ENCODE measurements at regions of chr17 and their contacts with region 1.

Region 1: DNA sequence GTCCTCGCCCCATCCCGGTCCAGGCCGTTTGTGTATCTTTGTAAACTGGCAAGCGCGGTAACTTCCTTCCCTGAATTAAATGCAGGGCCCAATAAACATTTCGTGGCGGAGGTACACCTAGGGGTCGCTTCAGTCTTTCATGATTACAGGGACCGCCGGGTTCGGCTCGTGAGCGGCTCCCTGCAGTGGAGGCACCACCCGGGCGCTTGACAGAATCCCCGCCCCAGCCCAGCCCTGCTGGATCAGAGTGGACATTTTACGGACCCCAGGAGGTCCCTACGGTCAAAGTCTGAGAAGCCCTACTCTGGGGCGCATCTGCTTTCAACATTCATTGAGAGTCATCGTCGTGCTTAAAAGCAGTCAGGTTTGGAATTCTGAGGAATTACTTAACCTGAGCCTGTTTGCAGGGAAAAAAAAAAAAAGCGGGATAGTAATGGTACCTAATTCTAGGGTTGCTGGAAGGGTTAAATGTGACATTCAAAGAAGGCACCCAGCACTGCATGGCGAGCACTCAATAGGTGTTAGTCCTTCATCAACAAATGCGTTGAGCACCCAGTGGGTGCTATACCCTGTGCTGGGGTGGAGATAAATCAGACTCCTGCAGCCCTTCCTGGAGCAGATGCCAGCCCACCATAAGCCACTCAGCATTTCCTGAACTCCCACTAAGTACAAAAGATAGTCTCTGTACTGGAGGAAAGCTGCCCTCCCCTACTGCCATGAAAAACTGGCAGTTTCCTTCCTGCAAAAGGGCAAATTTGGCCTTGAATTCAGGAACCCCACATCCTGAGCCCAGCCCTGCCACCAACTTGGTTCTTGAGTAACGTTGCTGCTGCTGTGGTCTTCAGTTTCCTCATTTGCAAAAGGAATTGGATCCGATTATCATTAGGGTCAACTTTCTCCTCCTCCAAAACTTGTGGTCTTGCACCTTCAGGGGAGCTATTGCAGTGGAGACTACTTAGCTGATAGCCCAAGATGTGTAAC is 658 bp upstream of the DUSP3 start:
- DNase-seq: no peak
- ATAC-seq: no peak
- H3K4me3 ChIP-seq: peak overlapping the region; percentile 98
- H3K27ac ChIP-seq: peak overlapping the region; percentile 100
- H3K4me1 ChIP-seq: peaks cover 36% of the 10 kb centered on the region
- H3K27me3 ChIP-seq: no peaks in the 10 kb centered on the region
- CTCF ChIP-seq: no peak

Region 2: DNA sequence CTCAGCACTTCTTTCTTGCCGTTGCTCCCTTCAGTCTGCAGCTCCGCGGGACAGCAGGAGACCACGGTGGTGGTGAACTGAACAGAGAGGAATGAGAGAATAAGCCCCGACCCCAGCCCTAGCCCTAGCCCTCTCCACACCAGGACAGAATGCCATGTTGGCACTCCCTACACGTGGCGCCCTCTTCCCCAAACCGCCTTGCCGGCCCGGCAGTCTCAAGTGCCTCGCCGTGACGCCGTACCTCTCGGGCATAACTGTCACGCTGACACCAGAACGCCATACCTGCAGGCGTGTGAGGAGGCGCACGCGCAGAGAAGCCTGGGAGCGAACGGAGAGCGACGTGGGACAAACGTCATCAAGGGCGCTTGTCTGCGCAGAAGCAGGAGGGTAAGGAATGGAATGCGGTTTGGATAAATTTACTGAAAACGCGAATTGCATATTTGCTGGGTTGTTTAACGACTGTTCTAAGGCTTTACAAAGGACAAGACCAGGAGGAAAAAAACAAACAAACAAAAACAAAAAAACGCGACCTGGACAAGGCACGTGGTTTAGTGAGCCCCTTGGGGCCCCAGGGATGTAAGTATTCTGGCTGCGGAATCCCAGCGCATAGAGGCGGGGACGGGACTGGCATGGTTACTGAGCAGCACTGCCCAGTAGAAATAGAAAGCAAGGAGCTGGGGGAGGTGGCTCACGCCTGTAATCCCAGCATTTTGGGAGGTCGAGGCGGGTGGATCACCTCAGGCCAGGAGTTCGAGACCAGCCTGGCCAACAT is 815.1 kb before region 1 on chr17 and contains the start of gene AARSD1:
- intact Hi-C with region 1: no loop called
- DNase-seq: peak; percentile 90 to 95
- ATAC-seq: peak; percentile 96 to 98 (median 96)
- H3K4me3 ChIP-seq: peak within 1 kb of the TSS; percentile 70
- H3K27ac ChIP-seq: peak within 1 kb of the TSS; percentile 83
- H3K4me1 ChIP-seq: peaks cover 7% of the 10 kb centered on the region
- H3K27me3 ChIP-seq: no peaks in the 10 kb centered on the region
- CTCF ChIP-seq: no peak
- total RNA-seq, gene AARSD1: 29.7 to 54.6 (median 43.1) TPM

Region 3: DNA sequence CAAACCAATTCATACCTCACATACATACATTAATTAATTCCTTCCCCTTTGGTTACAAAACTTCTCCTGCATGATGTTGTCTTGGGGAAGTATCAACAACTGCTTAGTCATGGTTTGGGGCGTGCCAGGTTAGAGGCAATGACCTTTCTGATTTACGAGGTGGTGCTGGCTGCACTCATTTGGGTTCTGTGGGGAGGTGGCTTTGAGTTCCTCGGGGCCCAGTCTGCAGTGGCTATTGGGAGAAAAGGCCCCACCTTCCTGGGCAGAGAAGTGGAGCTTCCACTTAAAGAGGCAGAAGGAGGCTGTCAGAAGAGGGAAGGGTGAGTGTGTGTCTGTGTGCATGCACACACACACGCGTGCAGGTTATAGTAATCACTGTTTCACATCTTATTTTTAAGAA is 223.1 kb before region 1 on chr17:
- intact Hi-C with region 1: no loop called
- DNase-seq: peak; percentile 32 to 58
- ATAC-seq: peak; percentile 58 to 88 (median 72)
- H3K4me3 ChIP-seq: no peak overlapping the region
- H3K27ac ChIP-seq: no peak overlapping the region
- H3K4me1 ChIP-seq: peaks cover 11% of the 10 kb centered on the region
- H3K27me3 ChIP-seq: no peaks in the 10 kb centered on the region
- CTCF ChIP-seq: no peak

Region 4: DNA sequence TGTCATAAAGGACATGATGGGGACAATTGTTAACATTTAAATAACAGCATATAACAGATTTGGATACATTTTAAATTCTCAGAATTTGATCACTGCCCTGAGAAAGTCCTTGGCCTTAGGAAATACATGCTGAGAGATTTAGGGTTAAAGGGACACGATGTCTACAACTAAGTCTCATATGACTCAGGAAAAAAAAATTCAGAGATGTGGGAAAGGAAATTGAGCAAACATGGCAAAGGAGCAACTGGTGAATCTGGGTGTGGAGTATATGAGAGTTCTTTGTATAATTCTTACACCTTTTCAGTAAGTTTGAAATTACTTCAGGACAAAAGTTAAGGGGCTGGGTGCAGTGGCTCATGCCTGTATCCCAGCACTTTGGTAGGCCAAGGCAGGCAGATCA is 35.3 kb after region 1 on chr17:
- intact Hi-C with region 1: no loop called
- DNase-seq: no peak
- ATAC-seq: no peak
- H3K4me3 ChIP-seq: no peak overlapping the region
- H3K27ac ChIP-seq: no peak overlapping the region
- H3K4me1 ChIP-seq: no peaks in the 10 kb centered on the region
- H3K27me3 ChIP-seq: no peaks in the 10 kb centered on the region
- CTCF ChIP-seq: no peak

Region 5: DNA sequence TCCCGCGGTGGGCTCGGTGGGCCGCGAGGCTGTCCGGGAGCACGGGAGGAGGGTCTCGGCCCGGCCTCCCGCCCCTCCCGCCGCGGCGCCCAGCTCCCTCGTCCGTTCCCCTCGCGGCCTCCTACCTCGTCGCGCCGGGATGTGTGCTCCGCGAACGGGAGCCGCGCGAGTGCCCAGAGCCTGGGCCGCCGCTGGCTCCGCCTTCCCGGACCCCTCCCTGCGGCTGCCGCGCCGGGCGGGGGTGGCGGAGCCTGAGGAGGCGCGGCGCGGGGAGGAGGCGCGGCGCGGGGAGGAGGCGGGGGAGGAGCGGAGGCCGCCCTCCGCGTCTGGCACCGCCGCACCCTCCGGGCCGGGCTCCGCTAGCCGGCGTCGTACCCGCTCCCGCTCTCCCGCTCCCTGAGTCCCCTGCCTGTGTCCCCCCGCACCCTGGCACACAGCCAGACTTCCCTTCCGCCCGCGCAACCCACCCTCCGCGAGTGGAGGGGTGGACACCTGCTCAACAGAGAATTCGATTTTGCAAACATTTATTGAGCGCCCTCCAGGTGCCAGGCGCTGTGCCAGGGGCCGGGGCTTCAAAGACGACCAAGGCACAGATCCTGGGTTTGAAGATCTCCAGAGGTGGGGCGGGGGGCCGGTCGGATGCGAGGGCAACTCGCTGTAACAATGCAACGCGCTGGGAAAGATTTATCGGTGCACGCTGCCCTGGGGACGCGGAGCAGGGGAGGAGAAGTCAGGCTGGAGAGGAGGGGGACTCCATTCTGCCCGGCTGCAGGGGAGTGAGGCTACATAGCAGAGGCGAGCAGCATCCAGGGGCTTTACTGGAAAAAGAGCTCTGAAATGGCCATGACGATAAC is 53.8 kb after region 1 on chr17 and contains the start of gene MPP3:
- intact Hi-C with region 1: loop called in 1 of 2 experiments (anchors 5 kb)
- DNase-seq: peak; percentile 70 to 72
- ATAC-seq: peak; percentile 81 to 90 (median 84)
- H3K4me3 ChIP-seq: peak within 1 kb of the TSS; percentile 79
- H3K27ac ChIP-seq: peak within 1 kb of the TSS; percentile 30
- H3K4me1 ChIP-seq: peaks cover 4% of the 10 kb centered on the region
- H3K27me3 ChIP-seq: peaks cover 0 to 2% (median 0%) of the 10 kb centered on the region in 3 donors
- CTCF ChIP-seq: no peak
- total RNA-seq, gene MPP3: 1.4 to 2.0 (median 1.5) TPM

Region 6: GRCh38 chr17:43846221-43846712 is 66.8 kb after region 1 on chr17:
- intact Hi-C with region 1: loop called in 1 of 2 experiments (anchors 5 kb)
- DNase-seq: peak; percentile 87 to 92
- ATAC-seq: peak; percentile 94 to 98 (median 96)
- H3K4me3 ChIP-seq: peak overlapping the region; percentile 51
- H3K27ac ChIP-seq: peak overlapping the region; percentile 31
- H3K4me1 ChIP-seq: peaks cover 11% of the 10 kb centered on the region
- H3K27me3 ChIP-seq: no peaks in the 10 kb centered on the region
- CTCF ChIP-seq: peak; percentile 98

Region 7: GRCh38 chr17:43983515-43984411 is 204.3 kb after region 1 on chr17:
- intact Hi-C with region 1: no loop called
- DNase-seq: peak; percentile 21 to 56
- ATAC-seq: peak; percentile 36 to 71 (median 48)
- H3K4me3 ChIP-seq: peak overlapping the region; percentile 67
- H3K27ac ChIP-seq: no peak overlapping the region
- H3K4me1 ChIP-seq: peaks cover 12% of the 10 kb centered on the region
- H3K27me3 ChIP-seq: peaks cover 0 to 38% (median 7%) of the 10 kb centered on the region in 3 donors
- CTCF ChIP-seq: peak; percentile 6

Measured in psoas muscle (tissue), 8 donors.